ENCODE measurements at regions of chr14 and their contacts with region 1.

Region 1: GRCh38 chr14:94056579-94057308 is 24.3 kb downstream of the DDX24 start:
- DNase-seq: peak; percentile 45
- H3K4me3 Mint-ChIP-seq: peak overlapping the region; percentile 6
- H3K27ac Mint-ChIP-seq: peak overlapping the region; percentile 77
- H3K4me1 Mint-ChIP-seq: peaks cover 70% of the 10 kb centered on the region
- H3K27me3 Mint-ChIP-seq: no peaks in the 10 kb centered on the region

Region 2: GRCh38 chr14:94036313-94037050 is 20.3 kb before region 1 on chr14:
- intact Hi-C with region 1: loop called (anchors 2 kb)
- DNase-seq: peak; percentile 62
- H3K4me3 Mint-ChIP-seq: no peak overlapping the region
- H3K27ac Mint-ChIP-seq: no peak overlapping the region
- H3K4me1 Mint-ChIP-seq: peaks cover 5% of the 10 kb centered on the region
- H3K27me3 Mint-ChIP-seq: no peaks in the 10 kb centered on the region

Measured in activated T-helper 1 cell treated with anti-CD3 and anti-CD28 coated beads, Interleukin-12 subunit alpha, Interleukin-12 subunit beta, Interleukin-2, Interleukin-4 antibody, amounts not matched to agents 30 ng/mL and 10 ng/mL and 1 ng/mL, durations not matched to agents 14 hours and 24 hours and 36 hours (primary cell).